ENCODE measurements at regions of chr15 and their contacts with region 1.

Region 1: DNA sequence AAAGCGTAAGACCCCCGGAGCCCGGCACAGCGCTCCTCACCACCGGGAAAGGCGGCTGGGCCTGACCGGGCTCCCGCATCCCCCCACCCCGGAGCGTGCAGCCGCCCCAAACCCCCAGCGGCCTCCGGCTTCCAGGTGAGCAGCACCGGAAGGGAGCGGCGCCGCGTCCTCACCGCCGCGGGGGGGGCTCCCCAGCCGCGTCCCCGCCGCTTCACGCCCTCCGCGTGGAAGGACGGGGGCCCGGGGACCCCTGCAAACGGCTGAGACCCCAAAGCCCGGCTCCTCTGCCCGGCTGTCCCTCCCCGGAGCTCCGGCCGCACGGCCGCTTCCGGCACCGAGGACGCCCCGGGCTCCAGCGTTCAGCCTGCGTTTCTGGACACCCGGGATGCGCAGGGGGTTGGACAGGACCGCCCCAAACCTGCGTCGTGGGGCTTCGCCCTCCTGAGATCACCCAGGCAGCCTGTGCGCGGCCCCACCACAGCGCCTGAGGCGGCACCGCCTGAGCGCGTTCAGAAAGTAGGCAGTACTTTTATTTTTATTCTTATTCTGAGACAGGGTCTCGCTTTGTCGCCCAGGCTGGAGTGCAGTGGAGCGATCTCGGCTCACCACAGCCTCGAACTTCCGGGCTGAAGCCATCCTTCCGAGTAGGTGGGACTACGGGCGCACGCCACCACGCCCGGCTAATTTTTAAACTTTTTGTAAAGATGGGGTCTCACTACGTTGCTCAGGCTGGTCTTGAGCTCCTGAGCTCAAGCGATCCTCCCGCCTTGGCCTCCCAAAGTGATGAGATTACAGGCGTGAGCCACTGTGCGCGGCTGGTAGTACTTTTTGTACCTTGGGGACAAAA is 51.6 kb upstream of the BLM start:
- DNase-seq: peak; percentile 80
- H3K27ac ChIP-seq: peak overlapping the region; percentile 75
- CTCF ChIP-seq: no peak

Region 2: GRCh38 chr15:89385927-89386331 is 1279.6 kb before region 1 on chr15:
- CTCF ChIA-PET with region 1: no interaction called
- POLR2A ChIA-PET with region 1: interaction called, 10 read pairs
- DNase-seq: no peak
- H3K27ac ChIP-seq: no peak overlapping the region
- CTCF ChIP-seq: no peak

Measured in RWPE1 (cell line).